ENCODE measurements at regions of chr14 and their contacts with region 1.

Region 1: DNA sequence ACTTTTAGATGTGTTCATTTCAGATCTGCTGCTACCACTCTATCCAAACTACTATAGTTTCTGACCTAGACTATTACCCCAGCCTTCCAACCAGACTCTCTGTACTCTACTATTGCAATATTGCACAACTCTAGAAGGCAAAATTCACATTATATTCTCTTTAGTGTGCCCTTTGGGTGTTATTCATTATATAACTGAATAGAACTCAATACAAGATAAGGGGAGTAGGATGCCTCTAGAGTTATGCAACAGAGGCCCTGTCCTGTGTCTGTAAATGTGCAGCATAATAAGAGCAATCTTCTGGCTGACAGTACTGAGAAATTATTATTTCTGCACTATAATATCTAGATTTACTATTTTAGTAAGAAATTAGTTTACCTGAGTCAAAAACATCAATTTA is 63.1 kb downstream of the LRRC9 start:
- DNase-seq: no peak
- ATAC-seq: no peak
- H3K4me3 ChIP-seq: no peak overlapping the region
- H3K27ac ChIP-seq: no peak overlapping the region
- H3K4me1 ChIP-seq: no peaks in the 10 kb centered on the region
- CTCF ChIP-seq: no peak
- EP300 ChIP-seq: no peak
- POLR2A ChIP-seq: no peak
- RAD21 ChIP-seq: no peak

Region 2: GRCh38 chr14:59964251-59965007 is 18.6 kb before region 1 on chr14:
- CTCF ChIA-PET with region 1: interaction called, 15 read pairs
- POLR2A ChIA-PET with region 1: no interaction called
- DNase-seq: no peak
- ATAC-seq: peak; percentile 17 to 40; a peak in 3 of 6 replicates
- H3K4me3 ChIP-seq: no peak overlapping the region
- H3K27ac ChIP-seq: no peak overlapping the region
- H3K4me1 ChIP-seq: peaks cover 5% of the 10 kb centered on the region; the same call in 1 of the 3 replicates
- CTCF ChIP-seq: no peak
- EP300 ChIP-seq: no peak
- POLR2A ChIP-seq: no peak
- RAD21 ChIP-seq: no peak

Region 3: DNA sequence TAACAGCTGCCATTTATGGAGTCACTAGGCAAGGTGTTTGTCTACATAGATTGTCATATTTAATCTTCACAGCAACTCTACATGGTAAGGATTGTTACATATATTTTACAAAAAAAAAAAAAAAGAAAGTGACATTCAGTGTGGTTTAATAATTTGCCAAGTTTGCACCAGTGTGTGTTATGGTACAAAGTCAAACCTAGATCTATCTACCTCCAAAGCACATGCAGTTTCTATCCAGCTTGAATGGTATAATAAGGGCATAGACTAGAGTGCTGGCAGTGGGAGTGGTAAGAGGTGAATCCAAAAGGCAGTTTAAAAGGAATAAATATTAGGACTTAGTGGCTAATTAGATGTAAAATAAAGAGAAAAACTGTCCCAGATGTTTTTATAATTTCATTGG is 42.5 kb after region 1 on chr14:
- CTCF ChIA-PET with region 1: no interaction called
- POLR2A ChIA-PET with region 1: no interaction called
- DNase-seq: no peak
- ATAC-seq: no peak
- H3K4me3 ChIP-seq: no peak overlapping the region
- H3K27ac ChIP-seq: no peak overlapping the region
- H3K4me1 ChIP-seq: no peaks in the 10 kb centered on the region
- CTCF ChIP-seq: no peak
- EP300 ChIP-seq: no peak
- POLR2A ChIP-seq: no peak
- RAD21 ChIP-seq: no peak